Adrenal gland (tissue), 19 donors: ENCODE measurements at regions of chr10 and their contacts with region 1.

Region 1: DNA sequence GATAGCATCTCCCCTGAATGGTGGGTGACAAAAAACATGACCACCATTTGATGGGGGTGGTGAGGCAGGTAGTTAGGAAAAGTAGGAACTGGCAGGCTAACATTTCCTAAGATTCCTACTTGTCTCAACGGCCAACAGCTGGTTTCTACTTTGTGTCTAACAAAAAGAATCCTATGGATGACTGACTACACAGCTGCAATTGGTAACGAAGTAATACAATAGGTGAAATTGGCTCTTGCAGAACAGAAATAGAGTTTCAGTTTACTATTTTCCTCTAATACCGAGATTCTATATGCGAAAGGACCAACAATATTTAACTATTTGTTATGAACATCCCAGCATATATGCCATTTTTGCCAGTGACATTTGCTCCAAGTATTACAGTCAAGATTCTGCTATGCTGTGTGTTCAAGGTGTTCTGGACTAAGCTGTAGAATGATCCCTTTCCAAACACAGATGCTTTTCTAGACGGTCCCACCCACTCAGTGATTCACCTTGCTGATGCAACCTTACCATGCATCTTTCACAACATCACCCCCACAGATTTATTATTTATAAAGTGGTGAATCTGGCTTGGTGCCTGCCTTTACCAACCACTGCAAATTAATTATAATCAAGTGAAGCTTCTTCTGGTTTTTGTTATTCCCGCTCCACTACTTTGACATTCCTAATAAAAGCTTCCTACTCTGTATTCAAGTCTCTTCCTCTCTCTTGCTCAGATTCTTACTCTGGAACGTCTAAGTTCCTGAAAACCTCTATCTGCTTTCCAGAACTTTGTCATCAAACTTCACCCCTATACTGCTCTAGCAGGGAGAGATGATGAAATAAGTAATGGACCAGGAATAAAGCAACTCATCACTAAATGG is 16.8 kb downstream of the BBIP1 start:
- DNase-seq: no peak
- H3K4me3 ChIP-seq: no peak overlapping the region
- H3K27ac ChIP-seq: no peak overlapping the region
- H3K4me1 ChIP-seq: peaks cover 0 to 9% of the 10 kb centered on the region in 2 donors
- H3K27me3 ChIP-seq: no peaks in the 10 kb centered on the region
- CTCF ChIP-seq: no peak
- POLR2A ChIP-seq: no peak

Region 2: GRCh38 chr10:110556969-110557601 is 345.1 kb before region 1 on chr10:
- intact Hi-C with region 1: no loop called
- DNase-seq: peak in 4 of 7 donors; percentile 41 to 68 (median 48)
- H3K4me3 ChIP-seq: no peak overlapping the region
- H3K27ac ChIP-seq: no peak overlapping the region
- H3K4me1 ChIP-seq: no peaks in the 10 kb centered on the region
- H3K27me3 ChIP-seq: no peaks in the 10 kb centered on the region
- CTCF ChIP-seq: peak; percentile 31 to 69 (median 46)
- POLR2A ChIP-seq: no peak

Region 3: GRCh38 chr10:110600487-110601101 is 301.6 kb before region 1 on chr10:
- intact Hi-C with region 1: loop called in 1 of 2 experiments (anchors 10 kb)
- DNase-seq: peak in 4 of 7 donors; percentile 29 to 50 (median 34)
- H3K4me3 ChIP-seq: no peak overlapping the region
- H3K27ac ChIP-seq: no peak overlapping the region
- H3K4me1 ChIP-seq: no peaks in the 10 kb centered on the region
- H3K27me3 ChIP-seq: no peaks in the 10 kb centered on the region
- CTCF ChIP-seq: peak in 5 of 6 experiments; percentile 10 to 51 (median 35)
- POLR2A ChIP-seq: no peak

Region 4: DNA sequence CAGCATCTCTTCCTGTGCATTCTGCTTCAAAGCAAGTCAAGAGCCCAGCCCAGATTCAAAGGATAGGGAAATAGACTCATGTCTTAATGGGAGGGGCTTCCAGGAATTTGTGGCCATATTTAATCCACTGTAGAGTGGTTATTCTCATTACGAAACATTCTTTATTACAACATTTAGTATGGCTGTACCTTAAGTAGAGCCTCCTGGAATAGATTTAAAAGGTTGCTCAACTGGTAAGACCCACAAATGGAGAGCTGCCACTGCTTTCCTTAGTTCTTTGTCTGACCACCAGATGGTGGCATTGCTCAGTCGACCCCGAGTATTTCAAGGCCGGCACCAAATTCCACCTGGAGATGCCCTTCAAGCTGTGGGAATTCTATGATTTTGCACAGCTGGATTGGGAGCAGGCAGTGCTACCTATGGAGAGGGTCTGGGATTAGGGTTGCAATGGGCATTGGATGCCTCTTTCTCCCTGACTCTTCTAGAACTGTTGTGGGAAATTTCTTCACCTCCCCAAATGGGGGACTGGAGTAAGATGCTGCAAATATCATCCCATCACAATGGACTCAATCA is 155.8 kb before region 1 on chr10:
- intact Hi-C with region 1: loop called in 1 of 2 experiments (anchors 5 kb)
- DNase-seq: peak; percentile 49 to 84 (median 55)
- H3K4me3 ChIP-seq: no peak overlapping the region
- H3K27ac ChIP-seq: no peak overlapping the region
- H3K4me1 ChIP-seq: no peaks in the 10 kb centered on the region
- H3K27me3 ChIP-seq: no peaks in the 10 kb centered on the region
- CTCF ChIP-seq: peak; percentile 53 to 86 (median 77)
- POLR2A ChIP-seq: no peak

Region 5: DNA sequence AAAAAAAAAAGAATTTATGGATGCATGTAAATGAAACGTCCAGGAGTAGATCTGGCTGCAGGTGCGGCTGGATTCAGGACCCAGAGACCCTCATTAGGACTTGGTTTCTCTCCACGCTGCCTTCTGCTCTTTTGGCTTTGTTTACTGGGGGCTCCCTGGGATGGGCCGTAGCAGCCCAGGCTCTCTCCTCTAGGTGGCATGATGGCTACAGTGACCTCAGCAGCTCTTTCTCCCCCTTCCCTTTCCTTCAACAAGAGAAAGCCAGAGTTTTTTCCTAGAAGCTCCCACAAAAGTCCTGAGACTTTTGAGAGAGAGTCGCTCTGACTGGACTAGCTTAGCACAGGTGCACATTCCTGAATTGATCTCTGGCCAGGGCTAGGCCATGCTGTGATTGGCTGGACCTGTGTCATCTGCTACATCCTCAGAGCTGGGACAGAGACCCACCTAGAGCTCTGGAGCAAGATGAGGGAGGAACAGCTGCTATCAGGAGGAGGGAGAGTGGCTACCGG is 98.3 kb before region 1 on chr10:
- intact Hi-C with region 1: loop called in 1 of 2 experiments (anchors 5 kb)
- DNase-seq: peak in 6 of 7 donors; percentile 47 to 79 (median 66)
- H3K4me3 ChIP-seq: no peak overlapping the region
- H3K27ac ChIP-seq: no peak overlapping the region
- H3K4me1 ChIP-seq: peaks cover 0 to 8% of the 10 kb centered on the region in 2 donors
- H3K27me3 ChIP-seq: no peaks in the 10 kb centered on the region
- CTCF ChIP-seq: peak; percentile 36 to 78 (median 66)
- POLR2A ChIP-seq: no peak